ENCODE measurements at regions of chr1 and their contacts with region 1.

Region 1: GRCh38 chr1:117059678-117060440 is at the start of gene TTF2:
- DNase-seq: peak; percentile 98
- ATAC-seq: peak; percentile 94
- H3K4me3 Mint-ChIP-seq: no peak within 1 kb of the TSS
- H3K27ac Mint-ChIP-seq: no peak within 1 kb of the TSS
- H3K4me1 Mint-ChIP-seq: peaks cover 41% of the 10 kb centered on the region
- H3K27me3 Mint-ChIP-seq: no peaks in the 10 kb centered on the region
- total RNA-seq, gene TTF2: 99.7 to 108 TPM

Region 2: DNA sequence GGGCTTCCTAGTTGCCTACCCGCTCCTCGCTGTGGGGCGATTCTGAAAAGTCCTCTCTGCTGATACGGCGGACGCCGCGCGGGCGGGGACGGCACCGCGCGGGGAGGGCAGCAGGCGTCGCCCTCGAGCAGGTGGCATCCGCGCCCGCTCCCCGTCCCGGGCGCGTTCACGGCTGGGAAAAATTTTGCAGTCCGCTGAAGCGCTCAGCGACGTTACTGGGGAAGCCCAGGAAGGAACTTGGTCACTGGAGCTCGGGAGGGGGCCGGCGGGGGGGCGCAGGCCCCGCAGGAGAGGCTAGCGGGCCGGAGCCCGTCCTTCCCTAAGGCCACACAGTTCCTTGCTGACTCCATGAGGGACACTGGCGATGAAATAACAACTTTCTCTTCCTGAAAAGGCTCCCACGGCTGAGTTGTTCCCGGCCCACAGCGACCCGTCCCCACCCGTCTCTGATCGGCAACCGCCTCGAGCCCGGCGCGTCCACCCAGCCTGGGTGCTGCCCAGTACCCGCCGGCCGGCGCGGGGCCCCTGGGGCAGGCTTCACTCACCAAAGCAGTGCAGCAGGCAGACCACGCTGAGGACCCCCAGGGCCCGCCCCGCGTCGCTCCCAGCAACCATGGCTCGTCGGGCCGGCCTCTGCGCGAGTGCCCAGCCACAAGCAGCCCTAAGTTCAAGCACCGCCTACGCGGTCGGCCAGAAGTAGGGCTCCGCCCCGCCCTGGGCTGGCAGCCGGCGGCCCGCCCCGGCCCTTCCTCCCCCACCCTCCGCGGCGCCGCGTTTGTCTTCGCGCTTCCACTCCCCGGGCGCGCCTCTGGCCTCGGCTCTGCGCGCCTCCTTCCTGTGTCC is 489.3 kb before region 1 on chr1 and contains the start of gene CD58:
- CTCF ChIA-PET with region 1: interaction called, 15 read pairs
- POLR2A ChIA-PET with region 1: interaction called, 4 read pairs
- intact Hi-C with region 1: loop called (anchors 1 kb)
- DNase-seq: peak; percentile 93
- ATAC-seq: peak; percentile 77
- H3K4me3 Mint-ChIP-seq: peak within 1 kb of the TSS; percentile 91
- H3K27ac Mint-ChIP-seq: peak within 1 kb of the TSS; percentile 87
- H3K4me1 Mint-ChIP-seq: peaks cover 64% of the 10 kb centered on the region
- H3K27me3 Mint-ChIP-seq: peaks cover 8% of the 10 kb centered on the region
- total RNA-seq, gene CD58: 12.4 to 16.0 TPM

Region 3: DNA sequence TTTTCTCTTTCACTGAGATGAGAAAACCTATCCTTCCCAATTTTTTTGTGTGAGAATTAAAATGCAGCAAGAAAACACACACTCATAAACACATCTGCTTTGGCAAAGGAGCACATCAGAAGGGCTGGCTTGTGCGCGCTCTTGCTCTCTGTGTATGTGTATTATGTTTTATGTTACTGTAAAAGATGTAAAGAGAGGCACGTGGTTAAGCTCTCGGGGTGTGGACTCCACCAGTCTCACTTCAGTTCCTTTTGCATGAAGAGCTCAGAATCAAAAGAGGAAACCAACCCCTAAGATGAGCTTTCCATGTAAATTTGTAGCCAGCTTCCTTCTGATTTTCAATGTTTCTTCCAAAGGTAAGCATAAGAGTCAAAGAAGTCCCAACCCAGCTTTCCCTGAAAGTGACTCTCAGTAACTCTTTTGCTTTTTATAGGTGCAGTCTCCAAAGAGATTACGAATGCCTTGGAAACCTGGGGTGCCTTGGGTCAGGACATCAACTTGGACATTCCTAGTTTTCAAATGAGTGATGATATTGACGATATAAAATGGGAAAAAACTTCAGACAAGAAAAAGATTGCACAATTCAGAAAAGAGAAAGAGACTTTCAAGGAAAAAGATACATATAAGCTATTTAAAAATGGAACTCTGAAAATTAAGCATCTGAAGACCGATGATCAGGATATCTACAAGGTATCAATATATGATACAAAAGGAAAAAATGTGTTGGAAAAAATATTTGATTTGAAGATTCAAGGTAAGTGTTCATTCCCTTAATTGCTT is 305.5 kb before region 1 on chr1 and contains the start of gene CD2:
- CTCF ChIA-PET with region 1: interaction called, 3 read pairs
- POLR2A ChIA-PET with region 1: interaction called, 28 read pairs
- intact Hi-C with region 1: no loop called
- DNase-seq: peak; percentile 80
- ATAC-seq: peak; percentile 80
- H3K4me3 Mint-ChIP-seq: peak within 1 kb of the TSS; percentile 93
- H3K27ac Mint-ChIP-seq: peak within 1 kb of the TSS; percentile 100
- H3K4me1 Mint-ChIP-seq: peaks cover 41% of the 10 kb centered on the region
- H3K27me3 Mint-ChIP-seq: no peaks in the 10 kb centered on the region
- total RNA-seq, gene CD2: 287 to 291 TPM

Region 4: GRCh38 chr1:116826818-116827606 is 232.8 kb before region 1 on chr1:
- CTCF ChIA-PET with region 1: interaction called, 8 read pairs
- POLR2A ChIA-PET with region 1: interaction called, 16 read pairs
- intact Hi-C with region 1: loop called (anchors 1 kb)
- DNase-seq: peak; percentile 87
- ATAC-seq: peak; percentile 90
- H3K4me3 Mint-ChIP-seq: peak overlapping the region; percentile 77
- H3K27ac Mint-ChIP-seq: peak overlapping the region; percentile 97
- H3K4me1 Mint-ChIP-seq: peaks cover 69% of the 10 kb centered on the region
- H3K27me3 Mint-ChIP-seq: no peaks in the 10 kb centered on the region

Region 5: DNA sequence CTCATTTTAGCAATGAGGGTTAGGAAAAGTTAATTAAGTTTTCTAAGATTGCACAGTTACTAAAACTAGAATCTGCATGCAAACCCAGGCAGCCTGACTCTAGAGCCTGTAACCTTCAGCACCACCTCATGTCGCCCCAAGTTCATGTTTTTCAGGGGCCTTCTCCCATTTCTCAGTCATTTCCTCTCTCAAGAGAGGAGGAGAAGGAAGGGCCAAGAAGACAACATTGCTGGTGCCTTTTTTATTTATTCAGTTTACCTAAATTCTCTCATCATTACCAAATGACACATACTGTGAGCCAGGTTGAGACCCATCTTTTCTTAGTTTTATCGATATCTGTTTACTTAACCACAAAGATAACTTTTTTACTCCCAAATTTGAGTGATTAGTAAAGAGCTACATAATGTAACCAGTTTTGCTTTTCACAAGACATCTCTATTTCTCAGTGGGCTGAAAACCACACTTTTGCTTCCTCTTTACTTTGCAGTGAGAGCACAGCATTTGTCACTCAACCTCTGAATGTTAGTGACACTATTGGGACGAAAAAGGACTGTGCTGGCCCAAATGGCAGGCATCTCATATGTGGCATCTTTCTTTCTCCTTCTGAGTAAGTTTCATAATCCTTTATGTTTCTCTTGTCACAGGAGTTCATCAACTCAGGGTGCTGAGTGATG is 58.5 kb before region 1 on chr1 and contains the start of gene CD101:
- CTCF ChIA-PET with region 1: interaction called, 4 read pairs
- POLR2A ChIA-PET with region 1: no interaction called
- intact Hi-C with region 1: loop called (anchors 1 kb)
- DNase-seq: peak; percentile 70
- ATAC-seq: peak; percentile 95
- H3K4me3 Mint-ChIP-seq: peak within 1 kb of the TSS; percentile 3
- H3K27ac Mint-ChIP-seq: peak within 1 kb of the TSS; percentile 66
- H3K4me1 Mint-ChIP-seq: peaks cover 53% of the 10 kb centered on the region
- H3K27me3 Mint-ChIP-seq: peaks cover 3% of the 10 kb centered on the region
- total RNA-seq, gene CD101: 0.30 to 0.60 TPM

Region 6: DNA sequence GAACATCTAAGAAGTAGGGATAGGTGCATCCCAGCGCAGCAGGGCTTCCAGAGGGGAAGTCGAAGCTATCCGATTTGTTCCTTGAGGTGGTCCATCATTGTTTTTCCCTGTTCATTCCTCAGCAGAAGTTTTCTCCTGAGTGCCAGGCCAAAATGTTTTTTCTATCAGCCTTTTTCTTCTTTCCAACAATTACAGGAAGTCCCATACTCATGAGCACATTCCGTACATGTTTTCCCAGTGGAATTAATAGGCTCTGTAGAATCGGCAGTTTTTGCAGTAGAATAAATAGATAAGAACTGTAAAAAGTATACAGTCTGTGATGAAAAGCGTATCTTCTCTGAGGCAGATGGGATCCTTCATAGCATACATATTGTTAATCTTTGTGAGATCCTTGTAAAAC is 33.5 kb before region 1 on chr1:
- CTCF ChIA-PET with region 1: no interaction called
- POLR2A ChIA-PET with region 1: no interaction called
- intact Hi-C with region 1: no loop called
- DNase-seq: no peak
- ATAC-seq: no peak
- H3K4me3 Mint-ChIP-seq: no peak overlapping the region
- H3K27ac Mint-ChIP-seq: no peak overlapping the region
- H3K4me1 Mint-ChIP-seq: peaks cover 11% of the 10 kb centered on the region
- H3K27me3 Mint-ChIP-seq: no peaks in the 10 kb centered on the region

Region 7: DNA sequence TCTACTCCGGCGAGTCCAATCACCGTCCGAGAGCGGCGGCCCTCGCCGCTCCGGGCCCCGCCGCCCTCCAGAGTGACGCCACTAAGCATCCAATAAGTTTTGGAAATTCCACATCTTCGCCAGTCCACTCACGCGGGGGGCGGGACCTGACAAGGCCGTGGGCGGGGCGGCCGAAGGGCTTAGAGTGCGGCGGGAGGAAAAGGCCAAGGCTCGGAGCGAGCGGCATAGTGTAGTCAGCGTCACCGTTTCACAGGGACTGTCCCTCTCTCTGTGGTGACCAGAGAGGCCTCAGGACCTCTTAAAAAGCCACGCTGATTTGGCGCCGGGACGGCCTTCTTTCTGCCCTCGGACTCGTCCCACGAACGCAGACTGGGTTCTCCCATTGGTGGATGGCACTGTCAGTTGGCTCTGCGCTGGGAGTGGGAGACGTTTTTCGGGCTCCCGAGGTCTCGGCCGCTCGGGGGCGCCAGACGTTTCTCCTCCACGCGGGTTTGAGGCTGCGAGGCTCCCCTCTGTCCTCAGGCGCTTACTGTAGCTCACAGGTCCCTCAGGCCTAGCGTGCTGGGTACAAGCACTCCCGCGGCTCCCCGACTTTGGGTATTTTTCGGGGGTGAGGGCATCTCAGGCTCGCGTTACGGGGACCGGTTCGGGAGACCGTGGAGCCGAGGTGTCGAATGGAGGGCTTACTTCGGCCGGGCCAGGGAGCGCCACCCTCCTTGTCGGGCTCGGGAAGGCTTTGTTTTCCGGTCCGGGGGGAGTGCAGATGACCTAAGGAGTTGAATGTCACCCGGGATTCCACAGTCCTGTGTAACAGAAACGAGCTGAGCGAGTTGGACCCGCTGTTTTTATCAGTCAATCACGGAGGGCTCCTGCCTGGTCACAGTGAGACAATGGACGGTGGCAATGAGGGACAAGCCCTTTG is 62.2 kb after region 1 on chr1:
- CTCF ChIA-PET with region 1: interaction called, 3 read pairs
- POLR2A ChIA-PET with region 1: no interaction called
- intact Hi-C with region 1: loop called in 1 of 2 experiments (anchors 2 kb)
- DNase-seq: peak; percentile 89
- ATAC-seq: peak; percentile 92
- H3K4me3 Mint-ChIP-seq: peak overlapping the region; percentile 71
- H3K27ac Mint-ChIP-seq: no peak overlapping the region
- H3K4me1 Mint-ChIP-seq: peaks cover 6% of the 10 kb centered on the region
- H3K27me3 Mint-ChIP-seq: peaks cover 14% of the 10 kb centered on the region

Region 8: DNA sequence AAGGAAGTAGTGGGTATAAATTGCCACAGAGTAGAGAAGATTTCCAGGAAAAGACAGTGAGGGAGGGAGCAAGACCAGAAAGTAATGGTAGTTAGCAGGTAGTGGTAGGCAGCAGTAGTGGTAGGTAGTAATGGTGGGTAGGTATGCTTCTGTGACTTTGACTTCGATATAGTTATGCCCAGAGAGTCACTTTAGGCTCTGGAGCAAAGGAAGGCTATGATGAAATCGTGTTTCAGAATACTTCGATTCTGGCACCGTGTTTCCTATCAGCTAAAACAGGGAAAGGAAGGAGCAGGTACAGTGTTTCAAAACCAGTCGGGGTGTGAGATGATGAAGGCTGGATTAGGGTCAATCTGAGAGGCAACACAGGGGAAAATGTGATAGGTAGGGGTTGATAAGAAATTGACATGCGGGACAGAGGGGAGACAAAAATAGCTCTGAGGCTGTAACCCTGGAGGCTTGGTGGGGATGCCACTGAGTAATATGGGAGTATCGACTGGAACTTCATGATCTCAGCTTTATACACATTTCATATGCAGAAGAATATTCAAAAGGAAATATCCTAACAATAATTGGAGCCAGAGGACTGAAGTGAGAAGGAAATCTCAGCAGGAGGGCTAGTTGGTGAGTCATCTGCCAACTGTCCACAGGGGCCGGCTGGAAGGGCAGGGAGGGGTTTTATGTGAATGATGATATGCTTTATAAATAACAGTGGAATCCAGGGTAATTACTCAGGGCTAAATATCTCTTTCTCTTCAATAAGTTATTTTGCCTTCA is 86.9 kb after region 1 on chr1:
- CTCF ChIA-PET with region 1: no interaction called
- POLR2A ChIA-PET with region 1: no interaction called
- intact Hi-C with region 1: no loop called
- DNase-seq: no peak
- ATAC-seq: no peak
- H3K4me3 Mint-ChIP-seq: no peak overlapping the region
- H3K27ac Mint-ChIP-seq: no peak overlapping the region
- H3K4me1 Mint-ChIP-seq: no peaks in the 10 kb centered on the region
- H3K27me3 Mint-ChIP-seq: peaks cover 10% of the 10 kb centered on the region

Region 9: GRCh38 chr1:117664314-117664713 is 604.5 kb after region 1 on chr1:
- CTCF ChIA-PET with region 1: no interaction called
- POLR2A ChIA-PET with region 1: interaction called, 4 read pairs
- intact Hi-C with region 1: loop called (anchors 1 to 5 kb)
- DNase-seq: peak; percentile 76
- ATAC-seq: peak; percentile 85
- H3K4me3 Mint-ChIP-seq: no peak overlapping the region
- H3K27ac Mint-ChIP-seq: peak overlapping the region; percentile 84
- H3K4me1 Mint-ChIP-seq: peaks cover 66% of the 10 kb centered on the region
- H3K27me3 Mint-ChIP-seq: peaks cover 5% of the 10 kb centered on the region

Measured in activated CD4-positive, alpha-beta T cell treated with anti-CD3 and anti-CD28 coated beads for 36 hours (primary cell).